PC-9 (cell line): ENCODE measurements at regions of chr2 and their contacts with region 1.

Region 1: DNA sequence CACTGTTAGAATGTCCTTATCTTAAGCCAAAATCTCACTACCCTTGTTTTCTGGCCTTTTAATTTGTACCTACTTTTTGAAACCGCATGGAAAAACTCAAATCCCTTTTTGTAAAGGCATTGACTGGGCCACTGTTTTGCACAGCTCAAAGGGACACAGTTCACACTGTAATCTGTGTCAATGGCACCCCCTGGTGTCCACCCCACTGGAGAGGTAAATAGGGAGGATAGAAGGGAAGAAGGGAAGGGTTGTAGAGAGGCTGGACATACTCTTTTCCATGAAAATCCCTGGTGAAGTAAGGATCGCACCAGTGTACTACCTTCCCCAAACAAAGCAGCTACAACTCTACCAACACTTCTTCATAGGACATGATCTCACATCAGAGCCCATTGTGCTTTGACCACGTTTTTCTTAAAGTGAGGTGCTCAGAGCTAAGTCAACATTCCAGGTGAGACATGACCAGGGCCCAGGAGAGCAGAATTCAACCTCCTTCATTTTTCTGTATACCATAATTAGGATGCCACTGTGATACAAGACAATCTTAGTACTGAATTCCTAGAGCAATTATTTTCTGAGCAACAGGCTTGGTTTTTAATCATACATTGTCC is 92.4 kb upstream of the RMDN2 start:
- DNase-seq: peak; percentile 67 to 84
- H3K4me3 ChIP-seq: no peak overlapping the region
- H3K27ac ChIP-seq: no peak overlapping the region
- H3K4me1 ChIP-seq: peaks cover 17% of the 10 kb centered on the region
- H3K27me3 ChIP-seq: no peaks in the 10 kb centered on the region
- CTCF ChIP-seq: peak; percentile 93

Region 2: GRCh38 chr2:37397166-37397565 is 435.5 kb before region 1 on chr2:
- CTCF ChIA-PET with region 1: interaction called, 12 read pairs
- POLR2A ChIA-PET with region 1: no interaction called
- intact Hi-C with region 1: loop called (anchors 1 kb)
- DNase-seq: no peak
- H3K4me3 ChIP-seq: no peak overlapping the region
- H3K27ac ChIP-seq: no peak overlapping the region
- H3K4me1 ChIP-seq: 0 out of 2 replicates have a peak, but pooled peaks cover 4% of the 10 kb centered on the region
- H3K27me3 ChIP-seq: no peaks in the 10 kb centered on the region
- CTCF ChIP-seq: no peak

Region 3: DNA sequence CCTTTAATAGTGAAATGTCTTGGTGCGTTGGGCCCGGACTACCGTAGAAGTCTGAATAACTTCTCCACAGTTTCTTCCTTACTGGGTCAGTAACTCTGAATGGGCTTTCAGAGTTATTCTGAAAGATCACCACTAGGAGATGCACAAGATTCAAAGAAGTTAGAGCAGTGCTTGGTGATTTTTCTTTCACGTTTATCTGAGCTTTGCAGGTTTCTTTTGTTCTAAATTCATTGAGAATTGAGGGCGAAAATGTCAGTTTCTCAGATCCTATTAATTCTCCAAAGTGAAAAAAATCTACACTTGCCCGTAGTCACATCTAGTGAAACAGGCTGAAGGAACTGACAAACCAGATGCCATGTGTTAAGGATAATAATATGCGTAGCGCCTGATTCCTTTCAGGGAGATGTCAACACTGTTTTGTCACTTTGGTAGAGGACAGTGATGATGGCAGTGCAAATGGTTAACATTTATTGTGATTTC is 418.2 kb before region 1 on chr2:
- CTCF ChIA-PET with region 1: interaction called, 28 read pairs
- POLR2A ChIA-PET with region 1: no interaction called
- intact Hi-C with region 1: loop called (anchors 1 kb)
- DNase-seq: peak; percentile 5 to 65
- H3K4me3 ChIP-seq: no peak overlapping the region
- H3K27ac ChIP-seq: no peak overlapping the region
- H3K4me1 ChIP-seq: no peaks in the 10 kb centered on the region
- H3K27me3 ChIP-seq: no peaks in the 10 kb centered on the region
- CTCF ChIP-seq: peak; percentile 94

Region 4: DNA sequence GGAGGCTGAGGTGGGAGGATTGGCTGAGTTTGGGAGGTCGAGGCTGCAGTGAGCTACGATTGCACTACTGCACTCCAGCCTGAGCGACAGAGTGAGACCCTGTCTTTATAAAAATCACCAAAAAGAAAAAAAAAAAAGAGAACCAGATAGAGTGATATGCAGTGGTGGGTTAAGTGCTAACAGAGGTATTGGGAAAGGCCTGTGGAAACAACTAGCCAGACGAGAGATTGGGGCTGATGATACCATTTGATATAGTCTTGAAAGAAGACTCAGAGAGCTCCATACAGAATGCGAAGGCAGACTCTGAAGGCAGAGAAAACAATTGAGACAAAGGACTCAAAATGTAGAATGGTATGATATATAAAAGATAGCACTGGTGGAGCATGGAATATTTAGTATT is 295.4 kb before region 1 on chr2:
- CTCF ChIA-PET with region 1: no interaction called
- POLR2A ChIA-PET with region 1: no interaction called
- intact Hi-C with region 1: loop called (anchors 1 kb)
- DNase-seq: no peak
- H3K4me3 ChIP-seq: no peak overlapping the region
- H3K27ac ChIP-seq: no peak overlapping the region
- H3K4me1 ChIP-seq: no peaks in the 10 kb centered on the region
- H3K27me3 ChIP-seq: no peaks in the 10 kb centered on the region
- CTCF ChIP-seq: no peak

Region 5: GRCh38 chr2:37570773-37571586 is 261.7 kb before region 1 on chr2:
- CTCF ChIA-PET with region 1: no interaction called
- POLR2A ChIA-PET with region 1: no interaction called
- intact Hi-C with region 1: no loop called
- DNase-seq: no peak
- H3K4me3 ChIP-seq: no peak overlapping the region
- H3K27ac ChIP-seq: no peak overlapping the region
- H3K4me1 ChIP-seq: peaks cover 15% of the 10 kb centered on the region
- H3K27me3 ChIP-seq: no peaks in the 10 kb centered on the region
- CTCF ChIP-seq: no peak

Region 6: GRCh38 chr2:37711308-37711731 is 121.4 kb before region 1 on chr2:
- CTCF ChIA-PET with region 1: no interaction called
- POLR2A ChIA-PET with region 1: no interaction called
- intact Hi-C with region 1: loop called (anchors 2 kb)
- DNase-seq: peak; percentile 80 to 95
- H3K4me3 ChIP-seq: no peak overlapping the region
- H3K27ac ChIP-seq: peak overlapping the region; percentile 66
- H3K4me1 ChIP-seq: peaks cover 42% of the 10 kb centered on the region
- H3K27me3 ChIP-seq: no peaks in the 10 kb centered on the region
- CTCF ChIP-seq: no peak

Region 7: GRCh38 chr2:37776487-37776886 is 56.2 kb before region 1 on chr2:
- CTCF ChIA-PET with region 1: no interaction called
- POLR2A ChIA-PET with region 1: no interaction called
- intact Hi-C with region 1: loop called (anchors 2 kb)
- DNase-seq: peak; percentile 76 to 93
- H3K4me3 ChIP-seq: no peak overlapping the region
- H3K27ac ChIP-seq: peak overlapping the region; percentile 62
- H3K4me1 ChIP-seq: peaks cover 56% of the 10 kb centered on the region
- H3K27me3 ChIP-seq: no peaks in the 10 kb centered on the region
- CTCF ChIP-seq: no peak

Region 8: GRCh38 chr2:38254796-38255195 is 422.1 kb after region 1 on chr2:
- CTCF ChIA-PET with region 1: no interaction called
- POLR2A ChIA-PET with region 1: no interaction called
- intact Hi-C with region 1: no loop called
- DNase-seq: peak in 1 of 2 experiments; percentile 29
- H3K4me3 ChIP-seq: no peak overlapping the region
- H3K27ac ChIP-seq: no peak overlapping the region
- H3K4me1 ChIP-seq: no peaks in the 10 kb centered on the region
- H3K27me3 ChIP-seq: no peaks in the 10 kb centered on the region
- CTCF ChIP-seq: no peak